HepG2 (cell line): ENCODE measurements at regions of chr2 and their contacts with region 1.

Region 1: GRCh38 chr2:230680463-230681170 is 32.0 kb upstream of the CAB39 start:
- DNase-seq: no peak
- ATAC-seq: peak; percentile 56
- H3K4me3 ChIP-seq: no peak overlapping the region
- H3K27ac ChIP-seq: no peak overlapping the region
- H3K4me1 ChIP-seq: peaks cover 14% of the 10 kb centered on the region
- H3K27me3 ChIP-seq: peaks cover 1 to 36% of the 10 kb centered on the region in 2 experiments; a peak in 4 of 5 replicates
- CTCF ChIP-seq: 0 out of 2 replicates have a peak, but pooled peaks have one; percentile 11
- EP300 ChIP-seq: no peak
- POLR2A ChIP-seq: no peak
- RAD21 ChIP-seq: no peak

Region 2: GRCh38 chr2:230748087-230748486 is 67.5 kb after region 1 on chr2:
- CTCF ChIA-PET with region 1: no interaction called
- POLR2A ChIA-PET with region 1: no interaction called
- in situ Hi-C with region 1: no loop called
- intact Hi-C with region 1: loop called (anchors 1 kb)
- DNase-seq: no peak
- ATAC-seq: no peak
- H3K4me3 ChIP-seq: no peak overlapping the region
- H3K27ac ChIP-seq: no peak overlapping the region
- H3K4me1 ChIP-seq: 0 out of 2 replicates have a peak, but pooled peaks cover 10% of the 10 kb centered on the region
- H3K27me3 ChIP-seq: no peaks in the 10 kb centered on the region
- CTCF ChIP-seq: no peak
- EP300 ChIP-seq: no peak
- POLR2A ChIP-seq: no peak
- RAD21 ChIP-seq: no peak

Region 3: DNA sequence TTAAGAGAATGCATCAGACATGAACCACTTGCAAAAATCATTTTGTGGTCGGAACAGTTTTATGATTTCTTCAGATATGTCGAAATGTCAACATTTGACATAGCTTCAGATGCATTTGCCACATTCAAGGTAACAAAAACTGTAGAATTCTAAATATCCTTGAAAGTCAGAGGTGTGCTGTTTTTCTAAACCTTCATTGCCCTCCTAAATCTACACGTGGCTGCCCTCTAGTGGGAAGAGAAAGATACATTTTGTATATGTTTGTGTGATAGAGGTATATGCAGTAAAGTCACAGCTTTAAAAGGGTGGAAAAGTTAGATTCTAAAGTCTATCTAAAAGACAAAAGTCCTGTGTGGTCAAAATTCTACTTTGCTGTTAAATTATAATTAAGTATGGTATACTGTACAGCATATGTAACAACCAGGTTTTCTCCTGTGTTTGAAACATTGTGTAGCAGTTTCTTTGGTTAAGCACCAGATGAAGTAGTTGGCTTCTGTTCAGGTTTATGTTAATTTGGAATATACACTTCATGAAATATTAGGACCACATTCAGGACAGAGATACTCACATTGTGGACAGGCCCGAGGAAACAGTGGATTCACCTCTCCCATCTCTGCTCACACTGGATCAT is 118.3 kb after region 1 on chr2:
- CTCF ChIA-PET with region 1: interaction called, 5 read pairs
- POLR2A ChIA-PET with region 1: no interaction called
- in situ Hi-C with region 1: no loop called
- intact Hi-C with region 1: loop called (anchors 1 kb)
- DNase-seq: peak; percentile 63
- ATAC-seq: peak; percentile 81
- H3K4me3 ChIP-seq: no peak overlapping the region
- H3K27ac ChIP-seq: no peak overlapping the region
- H3K4me1 ChIP-seq: no peaks in the 10 kb centered on the region
- H3K27me3 ChIP-seq: no peaks in the 10 kb centered on the region
- CTCF ChIP-seq: peak; percentile 82
- EP300 ChIP-seq: no peak
- POLR2A ChIP-seq: no peak
- RAD21 ChIP-seq: peak; percentile 48; the same call in 1 of the 2 replicates